CD4-positive, alpha-beta T cell (primary cell): ENCODE measurements at regions of chr2 and their contacts with region 1.

Region 1: GRCh38 chr2:105858868-105859693 is 114.4 kb downstream of the NCK2 start:
- DNase-seq: peak in 1 of 14 experiments; percentile 60
- ATAC-seq: peak; percentile 25
- H3K4me3 ChIP-seq: no peak overlapping the region
- H3K4me3 Mint-ChIP-seq: peak overlapping the region; percentile 27
- H3K27ac ChIP-seq: peak overlapping the region; percentile 26 to 90
- H3K27ac Mint-ChIP-seq: peak overlapping the region; percentile 97
- H3K4me1 ChIP-seq: peaks cover 89% of the 10 kb centered on the region
- H3K4me1 Mint-ChIP-seq: peaks cover 95% of the 10 kb centered on the region
- H3K27me3 ChIP-seq: no peaks in the 10 kb centered on the region
- H3K27me3 Mint-ChIP-seq: no peaks in the 10 kb centered on the region
- CTCF ChIP-seq: no peak

Region 2: GRCh38 chr2:105782123-105782522 is 77.0 kb before region 1 on chr2:
- CTCF ChIA-PET with region 1: interaction called, 3 read pairs
- POLR2A ChIA-PET with region 1: interaction called, 4 read pairs
- intact Hi-C with region 1: loop called in 1 of 2 experiments (anchors 5 kb)
- DNase-seq: peak in 3 of 14 experiments; percentile 42 to 73 (median 69)
- ATAC-seq: peak; percentile 56
- H3K4me3 ChIP-seq: no peak overlapping the region
- H3K4me3 Mint-ChIP-seq: peak overlapping the region; percentile 81
- H3K27ac ChIP-seq: peak overlapping the region in 1 of 2 donors; percentile 47
- H3K27ac Mint-ChIP-seq: peak overlapping the region; percentile 98
- H3K4me1 ChIP-seq: peaks cover 96% of the 10 kb centered on the region
- H3K4me1 Mint-ChIP-seq: peaks cover 97% of the 10 kb centered on the region
- H3K27me3 ChIP-seq: no peaks in the 10 kb centered on the region
- H3K27me3 Mint-ChIP-seq: no peaks in the 10 kb centered on the region
- CTCF ChIP-seq: peak; percentile 52

Region 3: DNA sequence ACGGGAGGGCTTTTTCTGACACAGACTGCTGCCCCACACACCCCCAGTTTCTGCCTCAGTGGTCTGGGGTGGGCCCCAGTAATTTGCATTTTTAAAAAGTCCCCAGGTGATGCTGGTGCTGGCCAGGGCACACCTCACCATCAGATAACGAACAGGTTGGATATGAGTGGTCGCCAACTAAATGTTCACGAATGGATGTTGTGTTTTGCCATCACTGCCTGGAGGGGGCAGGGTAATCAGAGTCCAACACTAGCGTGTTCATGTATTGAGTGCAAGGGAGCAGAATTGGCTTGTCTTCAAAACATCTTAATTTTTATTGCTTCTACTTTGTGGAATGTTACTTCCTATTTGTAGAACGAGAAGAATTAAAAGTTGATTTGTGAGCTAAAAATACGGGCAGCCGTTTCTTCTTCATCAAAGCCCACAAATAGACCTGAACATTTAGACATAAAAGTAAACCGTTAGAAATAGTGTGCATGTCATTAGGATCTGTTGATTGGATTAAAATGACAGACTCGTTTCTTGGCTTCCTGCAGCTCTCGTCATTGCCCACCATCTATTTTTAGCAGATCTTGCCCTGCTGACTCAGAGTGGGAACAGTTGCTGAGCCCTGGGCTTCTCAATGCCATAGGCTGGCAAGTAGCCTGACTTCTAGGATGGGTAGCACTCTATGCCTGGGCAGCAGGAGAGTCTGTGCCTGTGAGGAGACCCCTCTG is 69.2 kb before region 1 on chr2:
- CTCF ChIA-PET with region 1: interaction called, 5 read pairs
- POLR2A ChIA-PET with region 1: no interaction called
- intact Hi-C with region 1: loop called (anchors 2 to 5 kb)
- DNase-seq: peak in 9 of 14 experiments; percentile 37 to 85 (median 67)
- ATAC-seq: peak; percentile 85
- H3K4me3 ChIP-seq: peak overlapping the region; percentile 24
- H3K4me3 Mint-ChIP-seq: peak overlapping the region; percentile 79
- H3K27ac ChIP-seq: peak overlapping the region; percentile 76 to 83
- H3K27ac Mint-ChIP-seq: peak overlapping the region; percentile 98
- H3K4me1 ChIP-seq: peaks cover 89% of the 10 kb centered on the region
- H3K4me1 Mint-ChIP-seq: peaks cover 92% of the 10 kb centered on the region
- H3K27me3 ChIP-seq: no peaks in the 10 kb centered on the region
- H3K27me3 Mint-ChIP-seq: no peaks in the 10 kb centered on the region
- CTCF ChIP-seq: no peak

Region 4: GRCh38 chr2:105815401-105815800 is 43.7 kb before region 1 on chr2:
- CTCF ChIA-PET with region 1: no interaction called
- POLR2A ChIA-PET with region 1: interaction called, 3 read pairs
- intact Hi-C with region 1: loop called in 1 of 2 experiments (anchors 5 kb)
- DNase-seq: no peak
- ATAC-seq: no peak
- H3K4me3 ChIP-seq: no peak overlapping the region
- H3K4me3 Mint-ChIP-seq: no peak overlapping the region
- H3K27ac ChIP-seq: no peak overlapping the region
- H3K27ac Mint-ChIP-seq: peak overlapping the region; percentile 98
- H3K4me1 ChIP-seq: peaks cover 66% of the 10 kb centered on the region
- H3K4me1 Mint-ChIP-seq: peaks cover 90% of the 10 kb centered on the region
- H3K27me3 ChIP-seq: no peaks in the 10 kb centered on the region
- H3K27me3 Mint-ChIP-seq: no peaks in the 10 kb centered on the region
- CTCF ChIP-seq: no peak

Region 5: GRCh38 chr2:105893011-105893995 is 34.2 kb after region 1 on chr2:
- CTCF ChIA-PET with region 1: no interaction called
- POLR2A ChIA-PET with region 1: interaction called, 5 read pairs
- intact Hi-C with region 1: loop called in 1 of 2 experiments (anchors 5 kb)
- DNase-seq: no peak
- ATAC-seq: no peak
- H3K4me3 ChIP-seq: no peak overlapping the region
- H3K4me3 Mint-ChIP-seq: no peak overlapping the region
- H3K27ac ChIP-seq: no peak overlapping the region
- H3K27ac Mint-ChIP-seq: peak overlapping the region; percentile 94
- H3K4me1 ChIP-seq: peaks cover 36% of the 10 kb centered on the region
- H3K4me1 Mint-ChIP-seq: peaks cover 68% of the 10 kb centered on the region
- H3K27me3 ChIP-seq: no peaks in the 10 kb centered on the region
- H3K27me3 Mint-ChIP-seq: no peaks in the 10 kb centered on the region
- CTCF ChIP-seq: no peak

Region 6: DNA sequence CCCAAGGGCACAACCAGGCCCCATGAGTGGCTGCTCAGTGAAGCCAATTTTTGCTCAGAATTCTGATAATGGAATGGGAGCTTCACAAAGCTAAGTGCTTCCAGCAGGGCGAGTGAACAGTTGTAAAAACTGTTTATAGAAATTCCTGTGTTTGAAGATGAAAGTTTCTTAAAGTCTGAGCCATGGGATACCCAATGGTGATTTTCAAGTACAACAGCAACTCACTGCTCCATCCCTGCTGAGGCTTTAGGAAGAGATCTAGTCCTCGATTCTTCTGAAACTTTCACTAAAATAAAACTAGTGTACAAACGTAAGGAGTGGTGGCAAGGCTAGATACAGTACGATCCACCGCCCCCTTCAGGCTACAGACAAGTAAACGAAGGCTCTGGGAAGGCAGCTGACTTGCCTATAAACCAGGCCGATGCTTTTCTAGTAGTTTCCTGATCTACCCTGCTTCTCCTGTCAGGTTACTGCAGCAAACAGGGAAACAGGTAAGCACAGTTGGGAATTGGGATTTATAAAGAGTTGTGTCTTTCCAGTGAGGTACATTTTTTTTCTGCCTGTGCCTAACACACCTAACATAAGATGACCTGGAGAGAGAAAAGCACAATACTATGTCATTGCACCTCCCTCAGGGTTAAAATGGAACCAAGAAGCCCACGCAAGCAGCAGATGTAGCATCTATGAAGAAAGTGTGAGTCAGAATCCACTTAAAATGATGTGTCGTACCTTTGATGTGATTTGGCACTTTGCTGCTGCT is 226.3 kb after region 1 on chr2:
- CTCF ChIA-PET with region 1: interaction called, 5 read pairs
- POLR2A ChIA-PET with region 1: no interaction called
- intact Hi-C with region 1: loop called in 1 of 2 experiments (anchors 5 kb)
- DNase-seq: peak in 13 of 14 experiments; percentile 40 to 86 (median 60)
- ATAC-seq: peak; percentile 90
- H3K4me3 ChIP-seq: peak overlapping the region; percentile 9
- H3K4me3 Mint-ChIP-seq: peak overlapping the region; percentile 50
- H3K27ac ChIP-seq: peak overlapping the region; percentile 56 to 59
- H3K27ac Mint-ChIP-seq: peak overlapping the region; percentile 95
- H3K4me1 ChIP-seq: peaks cover 35% of the 10 kb centered on the region
- H3K4me1 Mint-ChIP-seq: peaks cover 73% of the 10 kb centered on the region
- H3K27me3 ChIP-seq: no peaks in the 10 kb centered on the region
- H3K27me3 Mint-ChIP-seq: no peaks in the 10 kb centered on the region
- CTCF ChIP-seq: peak; percentile 61

Region 7: GRCh38 chr2:106193977-106194778 is 335.1 kb after region 1 on chr2 and contains the start of gene UXS1:
- CTCF ChIA-PET with region 1: no interaction called
- POLR2A ChIA-PET with region 1: no interaction called
- intact Hi-C with region 1: no loop called
- DNase-seq: peak; percentile 96 to 99 (median 98)
- ATAC-seq: peak; percentile 81
- H3K4me3 ChIP-seq: peak within 1 kb of the TSS; percentile 81
- H3K4me3 Mint-ChIP-seq: peak within 1 kb of the TSS; percentile 98
- H3K27ac ChIP-seq: peak within 1 kb of the TSS; percentile 58 to 79
- H3K27ac Mint-ChIP-seq: peak within 1 kb of the TSS; percentile 98
- H3K4me1 ChIP-seq: peaks cover 44% of the 10 kb centered on the region
- H3K4me1 Mint-ChIP-seq: peaks cover 48% of the 10 kb centered on the region
- H3K27me3 ChIP-seq: no peaks in the 10 kb centered on the region
- H3K27me3 Mint-ChIP-seq: no peaks in the 10 kb centered on the region
- CTCF ChIP-seq: no peak
- total RNA-seq, gene UXS1: 59.3 to 67.1 TPM

Region 8: DNA sequence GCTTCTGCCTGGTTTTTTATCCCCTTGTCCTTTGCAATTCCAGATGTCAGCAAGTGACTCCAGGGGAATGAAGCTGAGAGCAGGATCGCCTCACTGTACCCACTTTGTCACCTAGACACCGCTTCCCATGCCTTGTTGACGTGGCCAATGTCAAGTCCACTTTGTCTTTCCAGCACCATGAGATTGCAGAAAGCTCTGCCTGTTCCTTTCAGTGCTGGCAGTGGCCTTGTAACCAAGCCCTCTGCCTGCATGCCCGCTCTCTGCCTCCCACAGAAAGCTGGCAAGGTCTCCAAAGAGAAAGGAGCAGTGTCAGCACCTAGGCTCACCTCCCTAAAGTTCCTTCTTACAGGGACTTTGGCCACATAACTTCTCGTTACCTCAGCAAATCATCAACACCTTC is 1309.1 kb after region 1 on chr2:
- CTCF ChIA-PET with region 1: no interaction called
- POLR2A ChIA-PET with region 1: no interaction called
- intact Hi-C with region 1: no loop called
- DNase-seq: no peak
- ATAC-seq: no peak
- H3K4me3 ChIP-seq: no peak overlapping the region
- H3K4me3 Mint-ChIP-seq: no peak overlapping the region
- H3K27ac ChIP-seq: no peak overlapping the region
- H3K27ac Mint-ChIP-seq: no peak overlapping the region
- H3K4me1 ChIP-seq: no peaks in the 10 kb centered on the region
- H3K4me1 Mint-ChIP-seq: no peaks in the 10 kb centered on the region
- H3K27me3 ChIP-seq: no peaks in the 10 kb centered on the region
- H3K27me3 Mint-ChIP-seq: no peaks in the 10 kb centered on the region
- CTCF ChIP-seq: no peak